ENCODE measurements at regions of chr18 and their contacts with region 1.

Region 1: GRCh38 chr18:48675352-48675761 is 136.5 kb downstream of the CTIF start:
- DNase-seq: peak; percentile 68 to 89 (median 80)
- ATAC-seq: peak; percentile 96
- H3K4me3 ChIP-seq: no peak overlapping the region
- H3K4me3 Mint-ChIP-seq: no peak overlapping the region
- H3K27ac ChIP-seq: no peak overlapping the region
- H3K27ac Mint-ChIP-seq: no peak overlapping the region
- H3K4me1 ChIP-seq: peaks cover 4% of the 10 kb centered on the region
- H3K4me1 Mint-ChIP-seq: no peaks in the 10 kb centered on the region
- H3K27me3 ChIP-seq: no peaks in the 10 kb centered on the region
- H3K27me3 Mint-ChIP-seq: no peaks in the 10 kb centered on the region
- CTCF ChIP-seq: peak; percentile 91

Region 2: DNA sequence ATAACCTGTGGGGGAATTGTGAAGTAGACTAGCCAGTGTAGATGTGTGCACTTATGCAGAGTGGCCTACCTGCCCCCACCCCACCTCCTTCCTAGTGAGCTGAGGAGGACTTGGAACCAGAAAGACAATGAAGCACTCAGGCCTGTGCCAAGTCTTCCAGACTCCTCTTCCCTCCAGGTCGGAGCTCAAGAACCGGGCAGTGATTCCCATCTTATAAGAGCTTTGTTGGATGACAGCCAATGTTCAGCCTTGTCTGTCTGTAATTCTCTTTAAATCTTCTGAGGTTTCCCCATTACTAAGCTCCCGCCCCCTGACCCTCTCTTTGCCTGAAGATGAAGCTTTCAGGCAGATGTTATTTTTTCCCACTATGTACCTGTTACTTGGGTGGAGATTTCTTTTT is 865.9 kb before region 1 on chr18:
- CTCF ChIA-PET with region 1: no interaction called
- POLR2A ChIA-PET with region 1: no interaction called
- intact Hi-C with region 1: no loop called
- DNase-seq: no peak
- ATAC-seq: no peak
- H3K4me3 ChIP-seq: no peak overlapping the region
- H3K4me3 Mint-ChIP-seq: no peak overlapping the region
- H3K27ac ChIP-seq: no peak overlapping the region
- H3K27ac Mint-ChIP-seq: no peak overlapping the region
- H3K4me1 ChIP-seq: no peaks in the 10 kb centered on the region
- H3K4me1 Mint-ChIP-seq: no peaks in the 10 kb centered on the region
- H3K27me3 ChIP-seq: no peaks in the 10 kb centered on the region
- H3K27me3 Mint-ChIP-seq: no peaks in the 10 kb centered on the region
- CTCF ChIP-seq: no peak

Region 3: GRCh38 chr18:48975649-48976204 is 300.4 kb after region 1 on chr18:
- CTCF ChIA-PET with region 1: interaction called, 3 read pairs
- POLR2A ChIA-PET with region 1: no interaction called
- intact Hi-C with region 1: loop called in 1 of 2 experiments (anchors 10 kb)
- DNase-seq: peak in 8 of 9 experiments; percentile 28 to 77 (median 58)
- ATAC-seq: peak; percentile 77
- H3K4me3 ChIP-seq: peak overlapping the region; percentile 48 to 50
- H3K4me3 Mint-ChIP-seq: peak overlapping the region; percentile 59
- H3K27ac ChIP-seq: no peak overlapping the region
- H3K27ac Mint-ChIP-seq: no peak overlapping the region
- H3K4me1 ChIP-seq: peaks cover 11% of the 10 kb centered on the region
- H3K4me1 Mint-ChIP-seq: peaks cover 7% of the 10 kb centered on the region
- H3K27me3 ChIP-seq: no peaks in the 10 kb centered on the region
- H3K27me3 Mint-ChIP-seq: peaks cover 29% of the 10 kb centered on the region
- CTCF ChIP-seq: no peak

Region 4: DNA sequence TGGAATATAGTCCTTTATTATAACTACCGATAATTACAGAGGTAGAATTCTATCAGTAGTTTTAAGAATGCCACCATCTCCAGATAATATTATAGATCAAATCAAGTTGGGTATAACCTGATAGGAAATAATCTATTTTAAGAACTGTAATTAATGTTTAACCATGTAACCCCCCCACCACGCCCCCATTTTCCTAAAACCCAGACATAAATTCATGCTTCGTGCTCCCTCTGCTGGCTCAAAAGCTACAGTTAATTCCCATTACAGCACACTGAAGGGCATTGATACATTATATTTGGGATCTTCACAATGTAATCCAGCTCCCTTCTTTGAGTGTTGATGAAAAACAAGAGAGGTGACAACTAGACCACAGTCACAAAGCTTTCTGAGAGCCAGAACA is 503.4 kb after region 1 on chr18:
- CTCF ChIA-PET with region 1: interaction called, 4 read pairs
- POLR2A ChIA-PET with region 1: no interaction called
- intact Hi-C with region 1: loop called (anchors 1 to 2 kb)
- DNase-seq: peak in 3 of 9 experiments; percentile 17 to 35 (median 23)
- ATAC-seq: no peak
- H3K4me3 ChIP-seq: no peak overlapping the region
- H3K4me3 Mint-ChIP-seq: no peak overlapping the region
- H3K27ac ChIP-seq: no peak overlapping the region
- H3K27ac Mint-ChIP-seq: no peak overlapping the region
- H3K4me1 ChIP-seq: no peaks in the 10 kb centered on the region
- H3K4me1 Mint-ChIP-seq: peaks cover 11% of the 10 kb centered on the region
- H3K27me3 ChIP-seq: no peaks in the 10 kb centered on the region
- H3K27me3 Mint-ChIP-seq: no peaks in the 10 kb centered on the region
- CTCF ChIP-seq: peak; percentile 29

Region 5: GRCh38 chr18:49412679-49413078 is 737.3 kb after region 1 on chr18:
- CTCF ChIA-PET with region 1: interaction called, 5 read pairs
- POLR2A ChIA-PET with region 1: no interaction called
- intact Hi-C with region 1: loop called (anchors 1 kb)
- DNase-seq: no peak
- ATAC-seq: peak; percentile 23
- H3K4me3 ChIP-seq: no peak overlapping the region
- H3K4me3 Mint-ChIP-seq: peak overlapping the region; percentile 13
- H3K27ac ChIP-seq: no peak overlapping the region
- H3K27ac Mint-ChIP-seq: peak overlapping the region; percentile 87
- H3K4me1 ChIP-seq: peaks cover 20% of the 10 kb centered on the region
- H3K4me1 Mint-ChIP-seq: peaks cover 46% of the 10 kb centered on the region
- H3K27me3 ChIP-seq: no peaks in the 10 kb centered on the region
- H3K27me3 Mint-ChIP-seq: no peaks in the 10 kb centered on the region
- CTCF ChIP-seq: no peak

Region 6: GRCh38 chr18:49510393-49511115 is 835.2 kb after region 1 on chr18:
- CTCF ChIA-PET with region 1: no interaction called
- POLR2A ChIA-PET with region 1: no interaction called
- intact Hi-C with region 1: loop called (anchors 5 to 10 kb)
- DNase-seq: peak; percentile 15 to 78 (median 51)
- ATAC-seq: peak; percentile 76
- H3K4me3 ChIP-seq: no peak overlapping the region
- H3K4me3 Mint-ChIP-seq: no peak overlapping the region
- H3K27ac ChIP-seq: no peak overlapping the region
- H3K27ac Mint-ChIP-seq: no peak overlapping the region
- H3K4me1 ChIP-seq: no peaks in the 10 kb centered on the region
- H3K4me1 Mint-ChIP-seq: no peaks in the 10 kb centered on the region
- H3K27me3 ChIP-seq: peaks cover 0 to 3% of the 10 kb centered on the region in 2 experiments
- H3K27me3 Mint-ChIP-seq: peaks cover 22% of the 10 kb centered on the region
- CTCF ChIP-seq: peak; percentile 76

Region 7: GRCh38 chr18:50356036-50356945 is 1680.9 kb after region 1 on chr18:
- CTCF ChIA-PET with region 1: no interaction called
- POLR2A ChIA-PET with region 1: no interaction called
- intact Hi-C with region 1: loop called (anchors 5 to 10 kb)
- DNase-seq: peak in 2 of 9 experiments; percentile 27 to 37
- ATAC-seq: peak; percentile 27
- H3K4me3 ChIP-seq: no peak overlapping the region
- H3K4me3 Mint-ChIP-seq: peak overlapping the region; percentile 33
- H3K27ac ChIP-seq: no peak overlapping the region
- H3K27ac Mint-ChIP-seq: peak overlapping the region; percentile 10
- H3K4me1 ChIP-seq: peaks cover 6% of the 10 kb centered on the region
- H3K4me1 Mint-ChIP-seq: peaks cover 8% of the 10 kb centered on the region
- H3K27me3 ChIP-seq: no peaks in the 10 kb centered on the region
- H3K27me3 Mint-ChIP-seq: peaks cover 23% of the 10 kb centered on the region
- CTCF ChIP-seq: no peak